MCF 10A (cell line): ENCODE measurements at regions of chr6 and their contacts with region 1.

Region 1: DNA sequence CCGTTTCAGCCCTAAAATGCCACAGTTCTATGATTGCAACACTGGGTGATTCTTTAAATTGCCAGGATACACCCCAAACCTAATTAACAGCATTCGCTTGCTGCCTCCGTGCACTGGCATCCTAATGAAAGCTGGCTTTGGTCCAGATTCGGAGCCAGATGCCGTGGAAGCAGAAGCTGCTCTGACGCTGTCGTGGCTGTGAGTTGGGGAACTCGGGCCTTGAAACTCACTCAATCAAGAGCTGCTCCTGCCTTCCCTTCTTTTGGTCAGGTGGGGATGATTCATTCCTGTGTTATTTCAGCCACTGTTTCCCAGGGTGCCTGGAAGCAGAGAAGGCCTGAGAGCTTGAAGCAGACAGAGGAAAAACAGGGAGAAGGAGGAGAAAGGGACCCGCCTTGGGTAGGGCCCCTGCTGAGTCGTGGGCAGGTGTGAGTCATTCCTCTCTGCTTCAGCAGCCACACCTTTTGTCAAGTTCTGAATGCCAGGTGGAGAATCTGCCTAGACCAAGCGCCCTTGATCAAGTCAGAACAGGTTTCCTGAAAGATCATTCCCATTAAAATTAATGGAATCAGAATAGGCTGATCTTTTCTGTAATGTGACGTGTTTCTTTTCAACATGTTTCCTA is 36.2 kb upstream of the DSP start:
- DNase-seq: peak; percentile 99
- H3K4me3 Mint-ChIP-seq: peak overlapping the region; percentile 33
- H3K27ac Mint-ChIP-seq: peak overlapping the region; percentile 95
- H3K4me1 Mint-ChIP-seq: peaks cover 26% of the 10 kb centered on the region
- H3K27me3 Mint-ChIP-seq: no peaks in the 10 kb centered on the region
- CTCF ChIP-seq: no peak

Region 2: GRCh38 chr6:7312616-7313504 is 192.4 kb before region 1 on chr6 and contains the start of gene SSR1:
- CTCF ChIA-PET with region 1: no interaction called
- POLR2A ChIA-PET with region 1: interaction called, 13 read pairs
- intact Hi-C with region 1: no loop called
- DNase-seq: peak; percentile 96
- H3K4me3 Mint-ChIP-seq: peak within 1 kb of the TSS; percentile 91
- H3K27ac Mint-ChIP-seq: peak within 1 kb of the TSS; percentile 83
- H3K4me1 Mint-ChIP-seq: peaks cover 16% of the 10 kb centered on the region
- H3K27me3 Mint-ChIP-seq: no peaks in the 10 kb centered on the region
- CTCF ChIP-seq: no peak
- total RNA-seq, gene SSR1: 318 and 396 TPM in 2 replicates

Region 3: GRCh38 chr6:7332090-7332745 is 173.1 kb before region 1 on chr6:
- CTCF ChIA-PET with region 1: no interaction called
- POLR2A ChIA-PET with region 1: no interaction called
- intact Hi-C with region 1: no loop called
- DNase-seq: peak; percentile 51
- H3K4me3 Mint-ChIP-seq: no peak overlapping the region
- H3K27ac Mint-ChIP-seq: no peak overlapping the region
- H3K4me1 Mint-ChIP-seq: no peaks in the 10 kb centered on the region
- H3K27me3 Mint-ChIP-seq: no peaks in the 10 kb centered on the region
- CTCF ChIP-seq: no peak

Region 4: DNA sequence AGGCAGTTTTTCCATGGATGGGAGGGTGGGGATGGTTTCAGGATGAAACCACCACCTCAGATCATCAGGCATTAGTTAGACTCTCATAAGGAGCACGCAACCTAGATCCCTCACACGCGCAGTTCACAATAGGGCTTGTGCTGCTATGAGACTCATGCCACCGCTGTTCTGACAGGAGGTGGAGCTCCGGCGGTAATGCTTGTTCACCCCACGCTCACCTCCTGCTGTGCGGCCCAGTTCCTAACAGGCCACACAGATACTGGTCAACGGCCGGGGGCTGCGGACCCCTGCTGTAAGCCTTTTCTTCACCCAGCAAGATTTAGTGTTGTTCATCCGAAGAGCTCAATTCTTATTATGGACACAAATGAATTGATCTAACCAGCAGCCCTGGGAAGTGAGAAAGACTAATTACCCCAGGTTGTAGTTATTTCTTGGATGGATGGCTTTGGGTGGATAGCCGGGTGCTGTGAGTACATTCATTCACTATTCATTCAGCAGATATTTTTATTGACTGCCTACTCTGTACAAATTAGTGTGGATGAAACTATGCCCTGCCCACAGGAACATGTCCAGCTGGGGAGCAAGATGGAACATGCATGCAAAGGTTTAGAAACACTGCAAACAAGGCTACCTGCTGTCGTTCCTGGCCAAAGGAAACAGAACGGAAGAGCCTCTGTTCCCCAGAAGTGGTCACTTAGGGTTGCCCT is 58.5 kb before region 1 on chr6:
- CTCF ChIA-PET with region 1: interaction called, 3 read pairs
- POLR2A ChIA-PET with region 1: interaction called, 10 read pairs
- intact Hi-C with region 1: no loop called
- DNase-seq: peak; percentile 60
- H3K4me3 Mint-ChIP-seq: peak overlapping the region; percentile 18
- H3K27ac Mint-ChIP-seq: peak overlapping the region; percentile 5
- H3K4me1 Mint-ChIP-seq: peaks cover 21% of the 10 kb centered on the region
- H3K27me3 Mint-ChIP-seq: no peaks in the 10 kb centered on the region
- CTCF ChIP-seq: no peak

Region 5: GRCh38 chr6:7479801-7480266 is 25.5 kb before region 1 on chr6:
- CTCF ChIA-PET with region 1: no interaction called
- POLR2A ChIA-PET with region 1: interaction called, 106 read pairs
- intact Hi-C with region 1: loop called (anchors 1 kb)
- DNase-seq: peak; percentile 100
- H3K4me3 Mint-ChIP-seq: peak overlapping the region; percentile 39
- H3K27ac Mint-ChIP-seq: peak overlapping the region; percentile 89
- H3K4me1 Mint-ChIP-seq: peaks cover 11% of the 10 kb centered on the region
- H3K27me3 Mint-ChIP-seq: no peaks in the 10 kb centered on the region
- CTCF ChIP-seq: no peak

Region 6: GRCh38 chr6:7589949-7590917 is 84.9 kb after region 1 on chr6 and contains the start of gene SNRNP48:
- CTCF ChIA-PET with region 1: no interaction called
- POLR2A ChIA-PET with region 1: interaction called, 13 read pairs
- intact Hi-C with region 1: no loop called
- DNase-seq: peak; percentile 94
- H3K4me3 Mint-ChIP-seq: peak within 1 kb of the TSS; percentile 90
- H3K27ac Mint-ChIP-seq: peak within 1 kb of the TSS; percentile 87
- H3K4me1 Mint-ChIP-seq: peaks cover 34% of the 10 kb centered on the region
- H3K27me3 Mint-ChIP-seq: no peaks in the 10 kb centered on the region
- CTCF ChIP-seq: no peak
- total RNA-seq, gene SNRNP48: 10.2 and 11.2 TPM in 2 replicates